PC-9 (cell line): ENCODE measurements at regions of chr1 and their contacts with region 1.

Region 1: GRCh38 chr1:98323906-98324358 is 337.6 kb upstream of the SNX7 start:
- DNase-seq: peak; percentile 83 to 97
- H3K4me3 ChIP-seq: peak overlapping the region; percentile 24; the same call in 1 of the 2 replicates
- H3K27ac ChIP-seq: peak overlapping the region; percentile 97
- H3K4me1 ChIP-seq: peaks cover 52% of the 10 kb centered on the region
- H3K27me3 ChIP-seq: no peaks in the 10 kb centered on the region
- CTCF ChIP-seq: no peak

Region 2: DNA sequence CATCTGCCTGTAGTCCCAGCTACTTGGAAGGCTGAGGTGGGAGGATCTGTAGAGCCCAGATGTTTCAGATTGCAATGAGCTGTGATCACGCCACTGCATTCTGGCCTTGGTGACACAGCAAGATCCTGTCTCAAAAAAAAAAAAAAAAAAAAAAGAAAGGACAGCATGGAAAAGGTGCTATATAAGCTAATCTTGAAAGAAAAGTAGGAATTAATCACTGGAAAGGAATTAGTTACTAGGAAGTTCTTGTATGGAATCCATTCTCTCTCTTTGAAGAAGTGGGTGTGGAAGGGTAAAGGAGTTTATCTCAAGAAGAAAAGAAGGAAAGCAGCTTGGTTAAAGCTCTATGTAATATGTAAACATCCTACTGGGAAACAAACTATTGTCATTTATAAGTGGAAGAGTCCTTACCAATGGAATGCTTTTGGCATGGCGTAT is 742.3 kb before region 1 on chr1:
- CTCF ChIA-PET with region 1: no interaction called
- POLR2A ChIA-PET with region 1: no interaction called
- intact Hi-C with region 1: loop called (anchors 2 kb)
- DNase-seq: peak; percentile 40 to 74
- H3K4me3 ChIP-seq: no peak overlapping the region
- H3K27ac ChIP-seq: peak overlapping the region; percentile 7; the same call in 1 of the 2 replicates
- H3K4me1 ChIP-seq: no peaks in the 10 kb centered on the region
- H3K27me3 ChIP-seq: no peaks in the 10 kb centered on the region
- CTCF ChIP-seq: no peak

Region 3: GRCh38 chr1:98001764-98002163 is 322.2 kb before region 1 on chr1:
- CTCF ChIA-PET with region 1: no interaction called
- POLR2A ChIA-PET with region 1: no interaction called
- intact Hi-C with region 1: loop called (anchors 5 kb)
- DNase-seq: no peak
- H3K4me3 ChIP-seq: no peak overlapping the region
- H3K27ac ChIP-seq: no peak overlapping the region
- H3K4me1 ChIP-seq: peaks cover 15% of the 10 kb centered on the region
- H3K27me3 ChIP-seq: no peaks in the 10 kb centered on the region
- CTCF ChIP-seq: peak; percentile 35; the same call in 1 of the 2 replicates

Region 4: GRCh38 chr1:98210064-98210463 is 113.9 kb before region 1 on chr1:
- CTCF ChIA-PET with region 1: no interaction called
- POLR2A ChIA-PET with region 1: interaction called, 13 read pairs
- intact Hi-C with region 1: loop called (anchors 1 kb)
- DNase-seq: peak; percentile 18 to 64
- H3K4me3 ChIP-seq: no peak overlapping the region
- H3K27ac ChIP-seq: no peak overlapping the region
- H3K4me1 ChIP-seq: no peaks in the 10 kb centered on the region; the same call in 1 of the 2 replicates
- H3K27me3 ChIP-seq: no peaks in the 10 kb centered on the region
- CTCF ChIP-seq: no peak

Region 5: GRCh38 chr1:98439471-98439870 is 115.5 kb after region 1 on chr1:
- CTCF ChIA-PET with region 1: no interaction called
- POLR2A ChIA-PET with region 1: no interaction called
- intact Hi-C with region 1: no loop called
- DNase-seq: no peak
- H3K4me3 ChIP-seq: no peak overlapping the region
- H3K27ac ChIP-seq: no peak overlapping the region
- H3K4me1 ChIP-seq: peaks cover 5% of the 10 kb centered on the region; the same call in 1 of the 2 replicates
- H3K27me3 ChIP-seq: no peaks in the 10 kb centered on the region
- CTCF ChIP-seq: no peak

Region 6: GRCh38 chr1:98468111-98468717 is 144.3 kb after region 1 on chr1:
- CTCF ChIA-PET with region 1: no interaction called
- POLR2A ChIA-PET with region 1: interaction called, 4 read pairs
- intact Hi-C with region 1: loop called (anchors 1 kb)
- DNase-seq: peak; percentile 4 to 59
- H3K4me3 ChIP-seq: no peak overlapping the region
- H3K27ac ChIP-seq: no peak overlapping the region
- H3K4me1 ChIP-seq: no peaks in the 10 kb centered on the region
- H3K27me3 ChIP-seq: no peaks in the 10 kb centered on the region
- CTCF ChIP-seq: peak; percentile 98